BJ (cell line): ENCODE measurements at regions of chr2 and their contacts with region 1.

Region 1: GRCh38 chr2:102240640-102241370 is 54.0 kb downstream of the IL1RL2 start:
- DNase-seq: peak; percentile 82
- H3K4me3 ChIP-seq: no peak overlapping the region
- H3K27me3 ChIP-seq: no peaks in the 10 kb centered on the region
- CTCF ChIP-seq: peak; percentile 99

Region 2: GRCh38 chr2:101587251-101587650 is 653.6 kb before region 1 on chr2:
- CTCF ChIA-PET with region 1: no interaction called
- POLR2A ChIA-PET with region 1: no interaction called
- DNase-seq: no peak
- H3K4me3 ChIP-seq: no peak overlapping the region
- H3K27me3 ChIP-seq: peaks cover 2% of the 10 kb centered on the region; the same call in 1 of the 2 replicates
- CTCF ChIP-seq: no peak

Region 3: GRCh38 chr2:101883863-101884262 is 356.9 kb before region 1 on chr2:
- CTCF ChIA-PET with region 1: interaction called, 23 read pairs
- POLR2A ChIA-PET with region 1: no interaction called
- DNase-seq: no peak
- H3K4me3 ChIP-seq: no peak overlapping the region
- H3K27me3 ChIP-seq: no peaks in the 10 kb centered on the region
- CTCF ChIP-seq: peak; percentile 63

Region 4: DNA sequence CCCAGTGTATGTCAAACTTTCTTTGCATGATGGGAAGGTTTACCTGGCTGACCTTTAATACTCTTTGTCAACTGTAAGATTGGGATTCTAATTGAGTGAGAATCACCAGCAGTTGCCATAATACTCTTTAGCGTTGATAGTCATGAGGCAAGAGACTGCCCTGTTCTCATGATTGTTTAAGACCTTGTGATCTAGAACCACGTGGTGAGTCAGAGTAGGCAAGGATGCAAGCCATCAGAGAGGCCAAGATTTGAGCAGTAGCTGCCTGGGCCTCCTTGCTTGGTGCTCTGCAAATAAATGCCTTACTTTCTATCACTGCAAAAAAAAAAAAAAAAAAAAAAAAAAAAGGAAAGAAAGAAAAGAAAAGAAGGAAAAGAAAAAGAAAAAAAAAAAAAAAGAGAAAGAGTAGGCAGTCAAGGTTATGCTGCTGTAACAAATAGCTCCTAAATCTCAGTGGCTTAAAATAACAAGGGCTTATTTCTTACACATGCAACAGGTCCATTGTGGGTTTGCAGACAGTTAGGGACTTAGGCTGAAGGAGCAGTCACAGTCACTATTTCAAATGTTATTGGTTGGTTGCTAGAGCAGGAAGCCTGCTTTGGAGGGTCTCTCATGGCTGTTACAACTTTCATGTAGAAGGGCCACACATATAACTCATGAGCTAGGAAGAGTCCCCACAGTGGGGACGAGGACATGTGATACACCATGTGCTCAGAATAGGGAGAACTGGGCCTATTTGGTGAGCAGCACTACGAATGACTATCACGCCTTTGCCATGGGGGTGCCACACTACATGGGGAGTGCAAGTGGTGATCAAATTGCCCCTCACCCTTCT is 227.4 kb before region 1 on chr2:
- CTCF ChIA-PET with region 1: interaction called, 63 read pairs
- POLR2A ChIA-PET with region 1: no interaction called
- DNase-seq: no peak
- H3K4me3 ChIP-seq: no peak overlapping the region
- H3K27me3 ChIP-seq: no peaks in the 10 kb centered on the region
- CTCF ChIP-seq: no peak

Region 5: DNA sequence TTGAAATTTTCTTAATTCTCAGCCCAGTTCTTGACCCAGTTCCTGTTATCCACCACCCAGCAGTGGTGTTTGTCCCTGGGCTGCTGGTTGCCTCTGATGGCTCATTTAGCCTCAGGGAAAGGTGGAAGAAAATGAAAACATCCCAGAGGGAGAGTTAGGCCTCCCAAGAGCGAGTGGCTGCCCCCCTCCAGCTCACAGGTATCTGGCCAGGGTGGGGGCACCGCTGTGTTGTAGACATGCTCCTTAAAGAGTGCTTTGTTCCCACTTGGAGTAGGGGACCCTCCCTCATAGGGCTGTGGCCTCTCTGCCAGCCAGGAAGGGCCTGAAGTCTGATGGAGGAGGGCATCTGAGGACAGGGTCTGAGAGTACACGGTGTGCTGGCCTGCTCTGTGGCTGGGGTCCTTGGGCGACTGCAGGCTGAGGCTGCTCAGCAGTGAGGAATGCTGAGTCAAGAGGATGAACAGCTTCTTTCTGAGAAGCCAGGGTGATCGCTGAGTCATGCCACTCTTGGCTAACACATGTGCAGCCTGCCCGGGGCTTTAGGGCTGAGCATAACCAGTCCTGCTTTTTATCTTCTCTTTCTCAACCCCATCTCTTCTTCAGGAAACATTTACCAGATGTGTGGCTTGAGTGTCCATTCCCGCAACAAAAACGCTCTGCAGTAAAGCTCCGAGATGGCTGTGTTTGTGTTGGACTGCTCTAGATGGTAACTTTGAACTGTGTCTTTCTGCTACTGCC is 176.7 kb before region 1 on chr2:
- CTCF ChIA-PET with region 1: interaction called, 12 read pairs
- POLR2A ChIA-PET with region 1: no interaction called
- DNase-seq: peak; percentile 95
- H3K4me3 ChIP-seq: no peak overlapping the region
- H3K27me3 ChIP-seq: no peaks in the 10 kb centered on the region
- CTCF ChIP-seq: no peak

Region 6: GRCh38 chr2:102179788-102180686 is 60.8 kb before region 1 on chr2:
- CTCF ChIA-PET with region 1: interaction called, 12 read pairs
- POLR2A ChIA-PET with region 1: no interaction called
- DNase-seq: no peak
- H3K4me3 ChIP-seq: no peak overlapping the region
- H3K27me3 ChIP-seq: no peaks in the 10 kb centered on the region; the same call in 1 of the 2 replicates
- CTCF ChIP-seq: no peak

Region 7: DNA sequence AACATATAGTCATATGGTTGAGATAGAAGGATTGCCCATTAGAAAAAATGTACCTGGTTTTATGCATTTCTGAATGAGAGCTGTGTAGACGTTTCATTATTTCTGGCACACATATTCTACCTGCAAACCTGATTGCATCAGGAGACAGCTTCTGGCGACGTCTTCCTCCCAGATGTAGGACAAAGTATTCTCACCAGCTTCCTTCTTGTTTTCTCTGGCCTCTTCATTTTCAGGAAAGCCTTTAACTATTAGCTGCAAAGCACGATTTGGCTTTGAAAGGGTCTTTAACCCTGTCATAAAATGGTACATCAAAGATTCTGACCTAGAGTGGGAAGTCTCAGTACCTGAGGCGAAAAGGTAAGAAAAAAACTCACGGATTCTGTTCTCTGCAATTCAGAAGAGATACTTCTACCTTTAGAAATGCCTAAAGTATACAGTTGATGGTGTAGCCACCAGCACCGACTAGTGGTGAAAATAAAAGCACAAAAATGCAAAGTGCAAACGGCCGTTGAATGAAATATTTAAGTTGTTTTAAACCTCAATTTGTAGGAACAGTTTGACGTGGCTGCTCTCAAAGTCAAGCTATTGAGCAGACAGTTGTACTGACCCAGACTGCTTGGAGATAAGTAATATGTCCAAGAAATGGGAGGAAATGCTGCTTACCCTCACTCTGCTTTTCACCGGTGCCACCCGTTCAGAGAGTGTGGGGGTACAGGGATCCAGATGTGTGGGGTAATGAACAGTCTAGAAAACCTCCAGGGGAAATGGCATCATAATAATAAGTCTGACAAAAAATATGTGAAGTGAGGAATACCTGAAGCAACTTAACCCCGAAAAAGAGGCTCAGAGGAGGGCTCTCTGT is 202.4 kb after region 1 on chr2:
- CTCF ChIA-PET with region 1: interaction called, 19 read pairs
- POLR2A ChIA-PET with region 1: no interaction called
- DNase-seq: no peak
- H3K4me3 ChIP-seq: no peak overlapping the region
- H3K27me3 ChIP-seq: no peaks in the 10 kb centered on the region; the same call in 1 of the 2 replicates
- CTCF ChIP-seq: peak; percentile 71